Thyroid gland (tissue), 4 donors: ENCODE measurements at regions of chr10 and their contacts with region 1.

Region 1: GRCh38 chr10:29446327-29446726 is 157.5 kb downstream of the LYZL1 start:
- DNase-seq: no peak
- H3K4me3 ChIP-seq: no peak overlapping the region
- H3K27ac ChIP-seq: no peak overlapping the region
- H3K4me1 ChIP-seq: no peaks in the 10 kb centered on the region
- H3K27me3 ChIP-seq: no peaks in the 10 kb centered on the region
- CTCF ChIP-seq: no peak
- POLR2A ChIP-seq: no peak

Region 2: GRCh38 chr10:29078919-29079318 is 367.4 kb before region 1 on chr10:
- intact Hi-C with region 1: no loop called
- DNase-seq: no peak
- H3K4me3 ChIP-seq: no peak overlapping the region
- H3K27ac ChIP-seq: no peak overlapping the region
- H3K4me1 ChIP-seq: peaks cover 7 to 9% of the 10 kb centered on the region in 2 donors
- H3K27me3 ChIP-seq: no peaks in the 10 kb centered on the region
- CTCF ChIP-seq: no peak
- POLR2A ChIP-seq: no peak

Region 3: GRCh38 chr10:29377333-29377961 is 68.9 kb before region 1 on chr10:
- intact Hi-C with region 1: loop called (anchors 5 kb)
- DNase-seq: no peak
- H3K4me3 ChIP-seq: no peak overlapping the region
- H3K27ac ChIP-seq: no peak overlapping the region
- H3K4me1 ChIP-seq: no peaks in the 10 kb centered on the region
- H3K27me3 ChIP-seq: no peaks in the 10 kb centered on the region
- CTCF ChIP-seq: peak; percentile 45 to 81 (median 48)
- POLR2A ChIP-seq: no peak

Region 4: GRCh38 chr10:29508554-29509244 is 62.4 kb after region 1 on chr10:
- intact Hi-C with region 1: no loop called
- DNase-seq: peak; percentile 40 to 43
- H3K4me3 ChIP-seq: no peak overlapping the region
- H3K27ac ChIP-seq: peak overlapping the region; percentile 15 to 66 (median 57)
- H3K4me1 ChIP-seq: peaks cover 6 to 10% of the 10 kb centered on the region in 2 donors
- H3K27me3 ChIP-seq: no peaks in the 10 kb centered on the region
- CTCF ChIP-seq: no peak
- POLR2A ChIP-seq: no peak